B cell (primary cell): ENCODE measurements at regions of chr1 and their contacts with region 1.

Region 1: GRCh38 chr1:116570358-116571200 is at the start of gene CD58:
- DNase-seq: peak; percentile 89
- ATAC-seq: peak; percentile 86
- H3K4me3 ChIP-seq: peak within 1 kb of the TSS; percentile 39 to 95 (median 91)
- H3K4me3 Mint-ChIP-seq: peak within 1 kb of the TSS; percentile 96
- H3K27ac ChIP-seq: peak within 1 kb of the TSS; percentile 79 to 92
- H3K27ac Mint-ChIP-seq: peak within 1 kb of the TSS; percentile 94
- H3K4me1 ChIP-seq: peaks cover 9 to 33% of the 10 kb centered on the region in 2 donors
- H3K4me1 Mint-ChIP-seq: peaks cover 63% of the 10 kb centered on the region
- H3K27me3 ChIP-seq: peaks cover 0 to 3% (median 0%) of the 10 kb centered on the region in 4 experiments
- H3K27me3 Mint-ChIP-seq: no peaks in the 10 kb centered on the region
- CTCF ChIP-seq: peak; percentile 84
- total RNA-seq, gene CD58: 47.1 and 47.6 TPM in 2 replicates

Region 2: DNA sequence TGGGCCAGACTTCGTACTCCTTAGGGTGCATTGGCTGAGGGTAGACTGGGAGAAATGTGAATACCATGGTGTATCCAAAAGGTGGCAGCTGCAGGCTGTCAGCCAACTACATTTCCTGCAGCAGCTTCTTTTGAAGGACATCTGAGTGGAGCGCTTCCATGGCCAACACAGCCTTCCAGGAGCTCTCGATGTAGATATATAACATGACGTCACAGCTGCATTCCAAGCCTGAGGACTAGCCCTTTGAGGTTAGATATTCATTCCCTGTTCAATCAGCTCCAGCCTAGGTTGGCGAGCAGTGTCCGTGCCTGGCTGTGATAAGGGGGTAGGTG is 351.6 kb before region 1 on chr1:
- CTCF ChIA-PET with region 1: no interaction called
- POLR2A ChIA-PET with region 1: no interaction called
- intact Hi-C with region 1: no loop called
- DNase-seq: no peak
- ATAC-seq: no peak
- H3K4me3 ChIP-seq: no peak overlapping the region
- H3K4me3 Mint-ChIP-seq: no peak overlapping the region
- H3K27ac ChIP-seq: no peak overlapping the region
- H3K27ac Mint-ChIP-seq: no peak overlapping the region
- H3K4me1 ChIP-seq: no peaks in the 10 kb centered on the region
- H3K4me1 Mint-ChIP-seq: no peaks in the 10 kb centered on the region
- H3K27me3 ChIP-seq: no peaks in the 10 kb centered on the region
- H3K27me3 Mint-ChIP-seq: peaks cover 12% of the 10 kb centered on the region
- CTCF ChIP-seq: no peak

Region 3: GRCh38 chr1:116372587-116373444 is 197.8 kb before region 1 on chr1 and contains the start of gene ATP1A1:
- CTCF ChIA-PET with region 1: interaction called, 3 read pairs
- POLR2A ChIA-PET with region 1: no interaction called
- intact Hi-C with region 1: loop called (anchors 1 kb)
- DNase-seq: peak; percentile 99
- ATAC-seq: peak; percentile 79
- H3K4me3 ChIP-seq: peak within 1 kb of the TSS; percentile 46 to 90 (median 84)
- H3K4me3 Mint-ChIP-seq: peak within 1 kb of the TSS; percentile 96
- H3K27ac ChIP-seq: peak within 1 kb of the TSS; percentile 81 to 91
- H3K27ac Mint-ChIP-seq: peak within 1 kb of the TSS; percentile 96
- H3K4me1 ChIP-seq: peaks cover 39 to 44% of the 10 kb centered on the region in 2 donors
- H3K4me1 Mint-ChIP-seq: peaks cover 37% of the 10 kb centered on the region
- H3K27me3 ChIP-seq: peaks cover 0 to 7% (median 3%) of the 10 kb centered on the region in 4 experiments
- H3K27me3 Mint-ChIP-seq: peaks cover 20% of the 10 kb centered on the region
- CTCF ChIP-seq: no peak
- total RNA-seq, gene ATP1A1: 101 and 107 TPM in 2 replicates

Region 4: DNA sequence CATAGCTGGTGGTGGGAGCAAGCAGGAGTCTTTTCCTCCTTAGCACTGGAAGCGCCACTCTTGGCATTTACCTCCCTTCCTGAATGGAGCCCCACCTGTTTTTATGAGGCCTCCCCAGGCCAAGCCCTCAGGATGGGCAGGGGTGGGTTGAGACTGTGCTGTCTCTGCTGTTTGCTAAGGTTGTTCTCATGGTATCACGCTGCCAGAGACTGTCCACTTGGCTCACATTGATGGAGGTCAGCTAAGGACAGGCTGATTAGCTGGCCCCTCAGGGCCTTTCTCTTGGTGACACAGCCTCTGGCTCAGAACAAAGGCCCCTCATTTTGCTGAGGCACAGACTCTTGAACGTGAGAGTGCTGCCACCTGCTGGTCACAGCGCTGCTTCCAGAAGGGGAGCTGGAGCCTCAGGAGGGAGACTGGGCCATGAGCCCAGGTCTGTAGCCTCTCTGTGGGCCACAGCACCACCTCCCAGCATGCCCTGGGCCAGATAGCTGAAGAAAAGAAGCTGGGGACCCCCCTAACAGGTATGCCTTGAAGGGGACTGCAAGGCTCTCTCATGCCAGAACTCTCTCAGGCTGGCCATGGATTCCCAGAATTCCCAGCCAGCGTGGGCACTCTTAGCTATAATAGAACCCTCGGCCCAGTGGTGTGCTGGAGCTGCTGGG is 85.4 kb before region 1 on chr1:
- CTCF ChIA-PET with region 1: interaction called, 20 read pairs
- POLR2A ChIA-PET with region 1: no interaction called
- intact Hi-C with region 1: no loop called
- DNase-seq: peak; percentile 84
- ATAC-seq: peak; percentile 91
- H3K4me3 ChIP-seq: no peak overlapping the region
- H3K4me3 Mint-ChIP-seq: no peak overlapping the region
- H3K27ac ChIP-seq: no peak overlapping the region
- H3K27ac Mint-ChIP-seq: peak overlapping the region; percentile 56
- H3K4me1 ChIP-seq: peaks cover 0 to 3% of the 10 kb centered on the region in 2 donors
- H3K4me1 Mint-ChIP-seq: peaks cover 3% of the 10 kb centered on the region
- H3K27me3 ChIP-seq: no peaks in the 10 kb centered on the region
- H3K27me3 Mint-ChIP-seq: no peaks in the 10 kb centered on the region
- CTCF ChIP-seq: peak; percentile 93

Region 5: GRCh38 chr1:116504308-116505156 is 66.0 kb before region 1 on chr1:
- CTCF ChIA-PET with region 1: interaction called, 20 read pairs
- POLR2A ChIA-PET with region 1: interaction called, 10 read pairs
- intact Hi-C with region 1: loop called (anchors 1 kb)
- DNase-seq: peak; percentile 89
- ATAC-seq: peak; percentile 98
- H3K4me3 ChIP-seq: no peak overlapping the region
- H3K4me3 Mint-ChIP-seq: peak overlapping the region; percentile 50
- H3K27ac ChIP-seq: peak overlapping the region; percentile 66 to 77
- H3K27ac Mint-ChIP-seq: peak overlapping the region; percentile 83
- H3K4me1 ChIP-seq: peaks cover 24 to 31% of the 10 kb centered on the region in 2 donors
- H3K4me1 Mint-ChIP-seq: peaks cover 45% of the 10 kb centered on the region
- H3K27me3 ChIP-seq: no peaks in the 10 kb centered on the region
- H3K27me3 Mint-ChIP-seq: no peaks in the 10 kb centered on the region
- CTCF ChIP-seq: no peak

Region 6: GRCh38 chr1:116544588-116545358 is 25.8 kb before region 1 on chr1:
- CTCF ChIA-PET with region 1: interaction called, 12 read pairs
- POLR2A ChIA-PET with region 1: no interaction called
- intact Hi-C with region 1: loop called (anchors 1 kb)
- DNase-seq: peak; percentile 41
- ATAC-seq: peak; percentile 53
- H3K4me3 ChIP-seq: no peak overlapping the region
- H3K4me3 Mint-ChIP-seq: peak overlapping the region; percentile 73
- H3K27ac ChIP-seq: peak overlapping the region; percentile 45 to 63
- H3K27ac Mint-ChIP-seq: peak overlapping the region; percentile 93
- H3K4me1 ChIP-seq: peaks cover 25 to 33% of the 10 kb centered on the region in 2 donors
- H3K4me1 Mint-ChIP-seq: peaks cover 69% of the 10 kb centered on the region
- H3K27me3 ChIP-seq: no peaks in the 10 kb centered on the region
- H3K27me3 Mint-ChIP-seq: no peaks in the 10 kb centered on the region
- CTCF ChIP-seq: no peak

Region 7: GRCh38 chr1:116654355-116654754 is 83.8 kb after region 1 on chr1:
- CTCF ChIA-PET with region 1: no interaction called
- POLR2A ChIA-PET with region 1: no interaction called
- intact Hi-C with region 1: no loop called
- DNase-seq: no peak
- ATAC-seq: no peak
- H3K4me3 ChIP-seq: no peak overlapping the region
- H3K4me3 Mint-ChIP-seq: no peak overlapping the region
- H3K27ac ChIP-seq: no peak overlapping the region
- H3K27ac Mint-ChIP-seq: no peak overlapping the region
- H3K4me1 ChIP-seq: no peaks in the 10 kb centered on the region
- H3K4me1 Mint-ChIP-seq: no peaks in the 10 kb centered on the region
- H3K27me3 ChIP-seq: no peaks in the 10 kb centered on the region
- H3K27me3 Mint-ChIP-seq: peaks cover 7% of the 10 kb centered on the region
- CTCF ChIP-seq: no peak

Region 8: DNA sequence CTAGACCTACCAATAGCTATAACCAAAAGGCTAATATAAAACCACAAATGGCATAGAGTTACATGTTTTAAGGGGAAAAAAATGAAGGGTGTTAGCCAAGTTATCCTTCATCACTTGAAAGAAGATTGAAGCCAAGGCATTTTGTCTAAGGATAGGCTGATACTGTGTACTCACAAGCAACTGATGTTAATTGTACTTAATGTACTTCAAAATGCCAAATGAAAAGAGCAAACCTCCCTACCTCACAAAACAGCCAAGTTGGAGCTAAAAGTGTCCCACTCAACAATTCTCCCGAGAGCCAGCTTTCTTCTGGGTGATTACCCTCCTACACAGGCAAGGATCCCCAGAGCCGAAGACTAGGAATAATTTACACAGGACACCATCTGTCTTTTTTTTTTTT is 101.3 kb after region 1 on chr1:
- CTCF ChIA-PET with region 1: interaction called, 16 read pairs
- POLR2A ChIA-PET with region 1: no interaction called
- intact Hi-C with region 1: no loop called
- DNase-seq: no peak
- ATAC-seq: no peak
- H3K4me3 ChIP-seq: no peak overlapping the region
- H3K4me3 Mint-ChIP-seq: no peak overlapping the region
- H3K27ac ChIP-seq: no peak overlapping the region
- H3K27ac Mint-ChIP-seq: no peak overlapping the region
- H3K4me1 ChIP-seq: peaks cover 3 to 7% of the 10 kb centered on the region in 2 donors
- H3K4me1 Mint-ChIP-seq: peaks cover 6% of the 10 kb centered on the region
- H3K27me3 ChIP-seq: peaks cover 0 to 14% (median 6%) of the 10 kb centered on the region in 4 experiments
- H3K27me3 Mint-ChIP-seq: peaks cover 49% of the 10 kb centered on the region
- CTCF ChIP-seq: no peak